ENCODE measurements at regions of chr14 and their contacts with region 1.

Region 1: GRCh38 chr14:67704484-67705089 is 2.9 kb downstream of the RDH12 start:
- DNase-seq: peak; percentile 45
- ATAC-seq: peak; percentile 95
- H3K4me3 ChIP-seq: no peak overlapping the region
- H3K27ac ChIP-seq: no peak overlapping the region
- H3K4me1 ChIP-seq: no peaks in the 10 kb centered on the region
- H3K27me3 ChIP-seq: no peaks in the 10 kb centered on the region
- CTCF ChIP-seq: peak; percentile 70 to 89 (median 77)
- EP300 ChIP-seq: no peak
- POLR2A ChIP-seq: no peak
- RAD21 ChIP-seq: peak; percentile 94

Region 2: DNA sequence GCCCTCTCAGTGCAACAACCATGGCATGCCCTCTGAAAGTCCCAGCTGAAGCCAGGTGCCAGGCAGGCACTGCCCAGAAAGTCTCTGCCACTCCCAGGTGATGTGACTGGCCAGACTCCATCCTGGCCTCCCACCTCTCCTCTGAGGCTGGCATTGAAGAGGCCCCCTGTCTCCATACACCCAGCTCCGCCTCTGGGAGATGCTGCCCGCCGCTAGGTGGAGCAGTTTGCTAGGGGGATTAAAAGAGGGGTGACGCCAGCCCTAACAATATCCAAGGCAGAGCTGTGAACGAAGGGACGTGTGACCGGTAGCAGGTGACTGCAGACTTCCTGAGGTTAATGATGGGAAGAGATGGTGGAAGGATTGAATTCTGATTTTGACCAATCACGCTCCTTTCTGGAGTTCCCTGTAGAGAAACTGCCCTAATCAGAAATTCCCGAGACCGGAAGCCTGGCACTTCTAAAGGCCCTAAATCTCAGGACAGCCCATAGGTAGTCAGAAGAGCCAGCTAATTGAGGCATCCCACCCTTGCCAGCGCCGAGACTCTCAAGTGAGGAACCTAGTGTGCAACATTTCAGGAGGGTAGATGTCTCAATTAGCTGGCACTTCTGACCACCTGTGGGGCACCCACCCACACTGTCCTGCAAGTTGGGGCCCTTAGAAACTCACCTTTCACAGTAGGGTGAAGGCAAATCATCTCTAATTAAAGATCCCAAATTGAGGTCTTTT is 284.3 kb before region 1 on chr14:
- CTCF ChIA-PET with region 1: interaction called, 41 read pairs
- POLR2A ChIA-PET with region 1: no interaction called
- RAD21 ChIA-PET with region 1: interaction called, 55 read pairs
- SMC1A ChIA-PET with region 1: interaction called, 46 read pairs
- in situ Hi-C with region 1: loop called (anchors 10 kb)
- intact Hi-C with region 1: loop called (anchors 2 kb)
- DNase-seq: no peak
- ATAC-seq: peak; percentile 91
- H3K4me3 ChIP-seq: no peak overlapping the region
- H3K27ac ChIP-seq: no peak overlapping the region
- H3K4me1 ChIP-seq: no peaks in the 10 kb centered on the region
- H3K27me3 ChIP-seq: peaks cover 0 to 4% of the 10 kb centered on the region in 2 experiments; a peak in 2 of 4 replicates
- CTCF ChIP-seq: peak; percentile 63 to 80 (median 69)
- EP300 ChIP-seq: no peak
- POLR2A ChIP-seq: no peak
- RAD21 ChIP-seq: peak; percentile 46

Region 3: GRCh38 chr14:67514650-67515385 is 189.8 kb before region 1 on chr14:
- CTCF ChIA-PET with region 1: interaction called, 10 read pairs
- POLR2A ChIA-PET with region 1: no interaction called
- RAD21 ChIA-PET with region 1: interaction called, 4 read pairs
- SMC1A ChIA-PET with region 1: interaction called, 3 read pairs
- in situ Hi-C with region 1: no loop called
- intact Hi-C with region 1: no loop called
- DNase-seq: no peak
- ATAC-seq: peak; percentile 68
- H3K4me3 ChIP-seq: peak overlapping the region; percentile 85
- H3K27ac ChIP-seq: no peak overlapping the region
- H3K4me1 ChIP-seq: peaks cover 20% of the 10 kb centered on the region
- H3K27me3 ChIP-seq: no peaks in the 10 kb centered on the region; a peak in 2 of 4 replicates
- CTCF ChIP-seq: no peak
- EP300 ChIP-seq: no peak
- POLR2A ChIP-seq: no peak
- RAD21 ChIP-seq: no peak

Region 4: DNA sequence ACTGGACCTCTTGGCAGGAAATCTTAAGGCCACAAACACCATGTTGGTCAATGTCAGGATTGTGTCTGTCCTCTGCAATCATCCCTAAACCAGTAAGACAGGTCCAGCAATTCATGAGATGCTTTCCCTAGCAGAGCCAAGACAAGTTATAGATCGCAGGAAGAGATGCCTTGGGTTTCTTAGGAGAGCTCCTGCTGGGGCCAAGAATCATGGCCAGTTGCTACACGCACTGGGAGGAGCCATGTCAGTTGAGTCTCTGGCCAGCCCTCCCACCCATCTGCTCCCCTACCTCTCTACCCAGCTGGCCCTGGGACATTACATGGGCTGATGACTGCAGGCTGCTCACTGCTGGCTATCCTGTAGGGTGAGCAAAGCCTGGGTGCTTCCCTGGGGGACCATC is 157.3 kb before region 1 on chr14:
- CTCF ChIA-PET with region 1: no interaction called
- POLR2A ChIA-PET with region 1: no interaction called
- RAD21 ChIA-PET with region 1: no interaction called
- SMC1A ChIA-PET with region 1: no interaction called
- in situ Hi-C with region 1: no loop called
- intact Hi-C with region 1: no loop called
- DNase-seq: no peak
- ATAC-seq: no peak
- H3K4me3 ChIP-seq: no peak overlapping the region
- H3K27ac ChIP-seq: no peak overlapping the region
- H3K4me1 ChIP-seq: no peaks in the 10 kb centered on the region
- H3K27me3 ChIP-seq: peaks cover 0 to 4% of the 10 kb centered on the region in 2 experiments
- CTCF ChIP-seq: no peak
- EP300 ChIP-seq: no peak
- POLR2A ChIP-seq: no peak
- RAD21 ChIP-seq: no peak

Region 5: GRCh38 chr14:67583711-67584644 is 120.6 kb before region 1 on chr14:
- CTCF ChIA-PET with region 1: interaction called, 359 read pairs
- POLR2A ChIA-PET with region 1: no interaction called
- RAD21 ChIA-PET with region 1: interaction called, 153 read pairs
- SMC1A ChIA-PET with region 1: interaction called, 206 read pairs
- in situ Hi-C with region 1: loop called (anchors 10 kb)
- intact Hi-C with region 1: loop called (anchors 1 kb)
- DNase-seq: no peak
- ATAC-seq: peak; percentile 98
- H3K4me3 ChIP-seq: no peak overlapping the region
- H3K27ac ChIP-seq: no peak overlapping the region
- H3K4me1 ChIP-seq: no peaks in the 10 kb centered on the region
- H3K27me3 ChIP-seq: no peaks in the 10 kb centered on the region
- CTCF ChIP-seq: peak; percentile 77 to 83 (median 80)
- EP300 ChIP-seq: no peak
- POLR2A ChIP-seq: no peak
- RAD21 ChIP-seq: peak; percentile 96

Region 6: GRCh38 chr14:67619446-67620216 is 85.0 kb before region 1 on chr14 and contains the start of gene ARG2:
- CTCF ChIA-PET with region 1: interaction called, 179 read pairs
- POLR2A ChIA-PET with region 1: interaction called, 5 read pairs
- RAD21 ChIA-PET with region 1: interaction called, 99 read pairs
- SMC1A ChIA-PET with region 1: interaction called, 95 read pairs
- in situ Hi-C with region 1: loop called (anchors 5 kb)
- intact Hi-C with region 1: loop called (anchors 1 kb)
- DNase-seq: peak; percentile 65
- ATAC-seq: peak; percentile 97
- H3K4me3 ChIP-seq: peak within 1 kb of the TSS; percentile 82
- H3K27ac ChIP-seq: no peak within 1 kb of the TSS
- H3K4me1 ChIP-seq: peaks cover 5% of the 10 kb centered on the region; the same call in 1 of the 2 replicates
- H3K27me3 ChIP-seq: no peaks in the 10 kb centered on the region
- CTCF ChIP-seq: peak in 1 of 3 experiments; percentile 32; a peak in 1 of 6 replicates
- EP300 ChIP-seq: no peak
- POLR2A ChIP-seq: peak; percentile 56
- RAD21 ChIP-seq: no peak
- polyA plus RNA-seq, gene ARG2: 2.1 to 3.2 TPM

Region 7: DNA sequence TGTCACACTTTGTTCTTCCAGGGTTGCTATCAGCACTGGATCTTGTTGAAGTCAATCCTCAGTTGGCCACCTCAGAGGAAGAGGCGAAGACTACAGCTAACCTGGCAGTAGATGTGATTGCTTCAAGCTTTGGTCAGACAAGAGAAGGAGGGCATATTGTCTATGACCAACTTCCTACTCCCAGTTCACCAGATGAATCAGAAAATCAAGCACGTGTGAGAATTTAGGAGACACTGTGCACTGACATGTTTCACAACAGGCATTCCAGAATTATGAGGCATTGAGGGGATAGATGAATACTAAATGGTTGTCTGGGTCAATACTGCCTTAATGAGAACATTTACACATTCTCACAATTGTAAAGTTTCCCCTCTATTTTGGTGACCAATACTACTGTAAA is 53.9 kb before region 1 on chr14:
- CTCF ChIA-PET with region 1: interaction called, 16 read pairs
- POLR2A ChIA-PET with region 1: no interaction called
- RAD21 ChIA-PET with region 1: interaction called, 4 read pairs
- SMC1A ChIA-PET with region 1: interaction called, 3 read pairs
- in situ Hi-C with region 1: no loop called
- intact Hi-C with region 1: no loop called
- DNase-seq: no peak
- ATAC-seq: no peak
- H3K4me3 ChIP-seq: no peak overlapping the region
- H3K27ac ChIP-seq: no peak overlapping the region
- H3K4me1 ChIP-seq: no peaks in the 10 kb centered on the region
- H3K27me3 ChIP-seq: no peaks in the 10 kb centered on the region
- CTCF ChIP-seq: no peak
- EP300 ChIP-seq: no peak
- POLR2A ChIP-seq: no peak
- RAD21 ChIP-seq: no peak

Measured in GM12878 (cell line).